Posterior vena cava (tissue), 2 donors: ENCODE measurements at regions of chr11 and their contacts with region 1.

Region 1: GRCh38 chr11:10019906-10020682 is 273.9 kb downstream of the SBF2 start:
- DNase-seq: no peak

Region 2: DNA sequence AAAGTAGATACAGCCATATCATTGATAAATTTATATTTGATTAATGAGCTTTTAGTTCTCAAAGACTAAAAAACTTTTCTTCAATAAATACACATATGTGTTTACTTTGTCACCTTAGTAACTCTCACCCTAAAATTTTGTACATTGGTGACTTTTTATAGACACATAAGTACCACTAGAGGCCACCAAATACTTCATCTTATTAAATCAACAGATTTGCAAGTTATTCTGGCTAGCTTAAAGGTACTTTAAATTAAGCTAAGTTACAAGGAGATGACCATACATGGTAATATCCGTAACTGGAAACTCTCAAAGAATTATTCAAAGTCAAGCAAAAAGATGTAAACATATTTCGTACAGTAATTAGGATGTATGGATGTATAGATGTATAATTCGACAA is 161.7 kb after region 1 on chr11:
- intact Hi-C with region 1: loop called in 1 of 2 experiments (anchors 5 kb)
- DNase-seq: no peak